Caco-2 (cell line): ENCODE measurements at regions of chr1 and their contacts with region 1.

Region 1: DNA sequence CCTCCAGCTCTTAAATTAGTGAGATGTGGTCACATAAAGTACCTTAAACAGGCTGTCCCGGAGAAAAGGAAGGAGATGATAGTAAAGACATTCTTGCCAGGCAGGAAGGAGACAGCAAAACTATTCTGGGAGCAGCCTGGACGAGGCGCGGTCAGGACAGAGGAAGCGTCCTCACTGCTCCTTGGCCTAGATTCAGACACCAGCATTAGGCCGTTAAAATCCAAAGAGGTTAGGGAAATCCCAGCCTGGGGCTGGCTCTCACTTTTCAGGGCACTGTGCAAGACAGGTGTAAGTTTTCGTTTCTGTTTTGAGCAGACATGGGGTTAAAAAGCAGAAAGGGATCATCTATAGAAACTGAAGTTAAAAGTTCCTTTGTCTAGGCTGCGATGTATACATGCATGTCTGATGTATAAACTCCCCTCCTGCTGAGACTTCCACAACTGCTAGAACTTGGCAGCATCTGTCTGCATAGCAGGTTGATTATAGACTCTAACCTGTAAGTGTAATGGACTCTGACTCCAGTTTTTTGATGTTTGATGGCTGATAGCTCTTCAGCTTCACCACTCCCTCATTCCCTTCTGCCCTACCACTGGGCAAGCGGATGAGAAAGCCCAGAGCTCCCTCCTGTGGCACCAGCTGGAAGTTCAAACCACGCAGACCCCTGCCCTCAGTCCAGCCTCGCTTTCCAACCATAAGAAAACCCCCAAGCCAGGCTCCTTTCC is 21.5 kb downstream of the STPG1 start:
- DNase-seq: peak; percentile 58 to 72
- H3K4me3 ChIP-seq: no peak overlapping the region
- H3K4me3 Mint-ChIP-seq: no peak overlapping the region
- H3K27ac Mint-ChIP-seq: peak overlapping the region; percentile 53
- H3K4me1 ChIP-seq: 0 out of 2 replicates have a peak, but pooled peaks cover 12% of the 10 kb centered on the region
- H3K4me1 Mint-ChIP-seq: peaks cover 23% of the 10 kb centered on the region
- H3K27me3 ChIP-seq: no peaks in the 10 kb centered on the region
- H3K27me3 Mint-ChIP-seq: no peaks in the 10 kb centered on the region
- CTCF ChIP-seq: peak; percentile 68 to 85

Region 2: DNA sequence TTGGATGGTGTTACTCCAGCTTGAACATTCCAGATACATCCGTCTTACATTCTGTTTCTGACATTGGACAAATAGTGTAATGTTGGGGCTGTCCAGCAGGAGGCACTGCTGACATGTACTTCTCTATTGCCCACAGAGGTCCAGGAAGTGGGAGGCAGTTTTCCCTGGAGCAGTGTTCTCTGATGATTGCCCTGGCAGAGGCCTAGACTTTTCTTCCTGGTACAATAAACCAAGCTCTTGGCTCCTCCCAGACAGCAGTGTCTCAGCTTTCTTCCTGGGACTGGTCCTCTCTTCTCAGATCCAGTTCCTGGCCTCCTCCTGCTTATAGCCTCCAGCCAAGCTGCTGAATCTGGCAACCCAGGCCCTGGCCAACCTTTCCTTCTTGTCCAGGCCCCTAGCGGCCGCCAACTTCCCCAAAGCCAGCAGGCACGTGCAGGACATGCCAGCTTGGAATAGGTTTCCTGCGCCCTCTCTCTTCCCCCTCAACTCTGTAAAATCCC is 190.1 kb before region 1 on chr1:
- CTCF ChIA-PET with region 1: interaction called, 135 read pairs
- POLR2A ChIA-PET with region 1: interaction called, 3 read pairs
- intact Hi-C with region 1: loop called (anchors 1 kb)
- DNase-seq: peak; percentile 70 to 73
- H3K4me3 ChIP-seq: no peak overlapping the region
- H3K4me3 Mint-ChIP-seq: no peak overlapping the region
- H3K27ac Mint-ChIP-seq: no peak overlapping the region
- H3K4me1 ChIP-seq: no peaks in the 10 kb centered on the region
- H3K4me1 Mint-ChIP-seq: no peaks in the 10 kb centered on the region
- H3K27me3 ChIP-seq: no peaks in the 10 kb centered on the region
- H3K27me3 Mint-ChIP-seq: no peaks in the 10 kb centered on the region
- CTCF ChIP-seq: peak; percentile 59 to 77

Region 3: GRCh38 chr1:24319312-24319863 is 72.7 kb before region 1 on chr1 and contains the start of gene GRHL3:
- CTCF ChIA-PET with region 1: no interaction called
- POLR2A ChIA-PET with region 1: no interaction called
- intact Hi-C with region 1: loop called (anchors 2 kb)
- DNase-seq: peak; percentile 72 to 81
- H3K4me3 ChIP-seq: peak within 1 kb of the TSS; percentile 25
- H3K4me3 Mint-ChIP-seq: peak within 1 kb of the TSS; percentile 78
- H3K27ac Mint-ChIP-seq: peak within 1 kb of the TSS; percentile 3
- H3K4me1 ChIP-seq: no peaks in the 10 kb centered on the region; the same call in 1 of the 2 replicates
- H3K4me1 Mint-ChIP-seq: peaks cover 6% of the 10 kb centered on the region
- H3K27me3 ChIP-seq: no peaks in the 10 kb centered on the region
- H3K27me3 Mint-ChIP-seq: no peaks in the 10 kb centered on the region
- CTCF ChIP-seq: no peak
- total RNA-seq, gene GRHL3: 2.3 and 2.7 TPM in 2 replicates

Region 4: GRCh38 chr1:24744911-24745710 is 353.1 kb after region 1 on chr1 and contains the start of gene CLIC4:
- CTCF ChIA-PET with region 1: no interaction called
- POLR2A ChIA-PET with region 1: no interaction called
- intact Hi-C with region 1: no loop called
- DNase-seq: peak; percentile 99
- H3K4me3 ChIP-seq: peak within 1 kb of the TSS; percentile 66
- H3K4me3 Mint-ChIP-seq: peak within 1 kb of the TSS; percentile 84
- H3K27ac Mint-ChIP-seq: peak within 1 kb of the TSS; percentile 83
- H3K4me1 ChIP-seq: peaks cover 21% of the 10 kb centered on the region
- H3K4me1 Mint-ChIP-seq: peaks cover 23% of the 10 kb centered on the region
- H3K27me3 ChIP-seq: no peaks in the 10 kb centered on the region
- H3K27me3 Mint-ChIP-seq: no peaks in the 10 kb centered on the region
- CTCF ChIP-seq: peak in 1 of 2 experiments; percentile 21
- total RNA-seq, gene CLIC4: 125 and 140 TPM in 2 replicates